Right ventricle myocardium inferior (tissue), 1 donor: ENCODE measurements at regions of chr7 and their contacts with region 1.

Region 1: DNA sequence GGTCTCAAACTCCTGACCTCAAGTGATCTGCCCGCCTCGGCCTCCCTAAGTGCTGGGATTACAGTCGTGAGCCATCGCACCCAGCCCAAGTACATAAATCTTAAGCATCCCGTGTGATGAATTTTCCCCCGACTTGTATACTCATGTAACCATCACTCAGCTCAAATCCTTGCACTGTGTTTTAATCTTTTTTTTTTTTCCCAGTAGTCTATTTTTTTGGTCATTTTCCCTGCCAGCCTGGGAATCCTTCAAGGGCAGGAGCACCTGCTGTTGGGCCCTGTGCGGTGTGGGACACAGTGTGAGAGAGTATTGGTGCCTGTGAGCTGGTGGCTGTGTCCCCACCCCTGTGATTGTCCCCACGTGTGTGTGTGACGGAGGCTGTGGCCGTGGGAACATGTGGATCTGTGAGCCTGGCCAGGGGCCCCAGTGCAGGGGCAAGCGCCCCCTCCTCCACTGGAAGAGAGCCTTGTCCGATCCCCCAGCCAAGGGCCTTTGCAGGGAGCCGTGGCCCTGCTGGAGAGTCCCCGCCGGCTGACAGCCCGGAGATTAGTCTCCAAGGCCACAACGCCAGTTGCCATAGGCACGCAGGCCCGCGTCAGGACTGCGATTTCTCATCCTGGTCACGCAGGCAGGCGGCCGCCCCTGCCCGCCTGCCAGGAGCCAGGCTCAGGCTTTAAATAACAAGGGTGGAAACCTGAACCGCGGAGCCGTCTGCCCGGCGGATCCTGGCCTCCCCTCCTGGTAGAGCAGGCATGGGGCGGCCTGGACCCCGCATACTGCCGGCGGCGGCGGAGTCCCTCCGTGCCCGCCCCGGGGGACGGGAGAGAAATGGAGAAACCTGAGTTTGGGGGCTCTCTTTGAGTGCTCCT is 26.5 kb downstream of the GTF2IRD1 start:
- DNase-seq: peak; percentile 88
- ATAC-seq: peak; percentile 70

Region 2: DNA sequence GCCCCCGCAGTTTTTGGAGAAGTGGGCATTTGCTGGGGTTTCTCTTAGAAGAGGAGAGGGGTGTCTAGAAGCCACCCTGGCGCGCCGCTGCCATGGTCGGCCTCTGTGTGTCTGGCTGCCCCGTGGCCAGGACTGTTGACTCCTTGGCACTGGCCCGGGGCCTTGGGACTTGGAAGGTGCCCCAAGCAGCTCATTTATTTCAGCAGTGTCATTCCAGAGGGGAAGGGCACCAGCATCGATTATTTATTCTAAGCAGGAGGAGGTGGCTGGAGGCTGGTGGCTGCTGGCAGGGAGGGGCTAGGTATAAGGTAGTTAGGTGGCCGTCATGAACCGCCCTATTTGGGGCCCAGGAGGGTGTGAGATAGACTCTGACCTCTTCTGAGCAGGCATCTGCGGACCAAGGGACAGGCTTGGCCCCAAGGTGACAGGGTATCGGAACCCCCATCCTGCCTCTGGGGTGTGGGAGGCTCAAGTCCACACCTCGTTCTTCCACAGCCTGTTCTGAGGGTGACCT is 24.8 kb before region 1 on chr7:
- intact Hi-C with region 1: loop called (anchors 1 kb)
- DNase-seq: no peak
- ATAC-seq: peak; percentile 65

Region 3: DNA sequence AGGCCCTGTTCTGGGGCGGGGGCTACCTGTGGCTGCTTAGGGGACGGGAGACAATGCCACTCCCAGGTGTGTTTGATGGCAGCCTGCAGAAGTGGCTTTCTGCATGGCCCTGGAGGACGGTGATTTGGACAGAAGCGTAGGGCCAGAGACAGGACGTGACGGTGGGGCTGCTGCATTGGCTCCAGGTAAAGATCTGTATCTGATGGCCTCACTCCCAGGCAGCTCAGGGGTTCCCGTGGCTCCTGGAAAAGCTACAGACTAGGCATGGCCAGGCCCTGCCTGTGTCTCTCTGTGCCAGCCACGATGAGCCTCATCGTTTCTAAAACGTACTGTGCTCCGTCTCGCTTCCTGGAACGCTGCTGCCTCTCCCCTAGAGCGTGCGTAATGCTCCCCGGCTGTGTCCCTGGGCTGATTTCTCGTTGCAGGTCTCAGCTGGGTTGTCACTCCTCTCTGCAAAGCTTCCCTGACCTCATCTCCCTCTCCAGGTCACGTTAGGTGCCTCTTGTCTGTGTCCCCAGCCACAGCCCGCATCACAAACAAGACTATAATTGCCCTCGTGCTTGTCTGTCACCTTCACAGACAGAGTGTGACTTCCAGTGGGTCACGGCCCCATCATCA is 13.9 kb before region 1 on chr7:
- intact Hi-C with region 1: loop called (anchors 1 kb)
- DNase-seq: no peak
- ATAC-seq: peak; percentile 81

Region 4: DNA sequence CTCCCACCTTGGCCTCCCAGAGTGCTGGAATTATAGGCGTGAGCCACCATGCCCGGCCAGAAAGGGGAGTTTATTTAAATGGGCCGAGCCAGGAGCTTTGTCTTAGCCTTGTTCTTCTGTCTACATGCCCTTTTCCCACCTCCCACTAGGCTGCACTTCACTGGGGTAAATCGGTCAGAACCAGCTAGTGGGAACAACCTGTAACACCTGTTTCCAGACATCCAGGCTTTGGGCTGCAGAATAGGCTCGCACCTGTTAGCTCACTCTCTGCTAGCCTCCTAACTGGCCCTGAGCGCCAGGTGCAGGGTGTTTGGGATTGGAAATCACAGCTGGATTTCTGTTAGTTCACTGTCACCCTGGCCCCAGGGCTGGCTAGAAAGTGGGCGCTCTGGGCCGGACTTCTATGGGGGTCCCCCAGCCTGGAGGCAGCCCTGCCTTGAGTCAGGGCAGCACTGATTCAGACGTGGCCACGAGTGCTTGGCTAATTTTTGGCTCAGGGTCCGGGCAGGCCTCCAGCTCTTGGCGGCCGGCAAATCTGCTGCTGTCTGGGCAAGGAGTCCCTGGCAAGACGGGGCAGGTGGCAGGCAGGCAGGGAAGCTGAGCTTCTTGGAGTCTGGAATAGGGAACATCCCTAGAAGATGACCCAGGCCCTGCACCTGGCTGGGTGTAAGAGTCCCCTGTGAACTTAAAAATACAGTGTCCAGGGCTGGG is 22.1 kb after region 1 on chr7:
- intact Hi-C with region 1: loop called (anchors 2 kb)
- DNase-seq: no peak
- ATAC-seq: peak; percentile 29

Region 5: DNA sequence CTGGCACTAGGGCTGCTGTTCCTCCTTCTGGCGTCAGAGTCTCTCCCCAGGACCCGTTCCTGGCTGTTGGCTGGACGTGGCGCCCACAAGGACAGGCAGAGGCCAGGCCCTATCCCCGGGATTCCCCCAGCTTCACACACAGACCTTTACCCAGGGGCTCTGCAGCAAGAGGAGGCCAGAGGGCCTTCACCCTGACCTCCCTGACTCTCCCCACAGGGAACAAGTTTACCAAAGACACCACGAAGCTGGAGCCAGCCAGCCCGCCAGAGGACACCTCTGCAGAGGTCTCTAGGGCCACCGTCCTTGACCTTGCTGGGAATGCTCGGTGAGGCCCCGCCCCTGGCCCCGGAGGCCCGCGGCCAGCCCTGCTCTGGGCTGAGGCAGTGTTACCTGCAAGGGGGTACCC is 55.8 kb after region 1 on chr7:
- intact Hi-C with region 1: loop called (anchors 2 kb)
- DNase-seq: no peak
- ATAC-seq: peak; percentile 53